ENCODE measurements at regions of chr12 and their contacts with region 1.

Region 1: DNA sequence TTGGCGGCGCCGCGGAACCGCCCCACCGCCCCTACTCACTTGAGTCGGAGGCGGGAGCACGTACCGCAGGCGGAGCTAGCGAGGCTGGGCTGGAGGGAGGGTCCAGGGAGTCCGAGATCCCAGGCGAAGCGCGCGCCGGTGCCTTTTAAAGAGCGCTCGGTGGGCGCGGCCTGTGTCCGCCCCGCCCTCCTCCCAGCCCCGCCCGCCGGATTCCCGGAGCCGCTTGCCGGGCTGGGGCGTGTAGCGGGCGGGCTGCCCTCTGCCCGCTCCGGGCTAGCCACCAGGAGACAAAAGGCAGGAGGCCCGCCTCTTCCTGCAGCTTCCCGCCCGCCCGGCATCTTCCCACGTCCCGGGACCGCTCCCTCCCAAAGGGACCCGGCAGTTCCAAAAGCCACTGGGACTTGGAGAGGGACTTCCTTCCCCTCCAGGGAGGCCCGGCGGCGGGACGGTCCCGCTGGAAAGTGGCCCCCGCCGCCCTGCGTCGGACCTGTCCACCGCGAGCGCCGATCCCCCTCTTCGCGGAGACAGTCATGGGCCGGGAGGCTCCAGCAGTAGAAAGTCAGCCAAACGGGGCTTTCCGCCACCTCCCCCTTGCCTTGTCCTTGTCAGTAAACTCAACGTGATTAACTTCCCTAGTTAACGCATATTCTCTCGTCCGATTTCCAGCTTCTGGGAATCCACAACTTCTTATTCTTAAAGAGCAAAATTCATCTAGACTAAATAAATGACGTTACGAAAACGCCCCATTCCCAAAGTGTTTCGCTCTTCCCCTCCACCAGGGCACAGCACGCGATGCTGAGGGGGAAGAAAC is at the start of gene CSRP2:
- DNase-seq: peak; percentile 82 to 93 (median 91)
- H3K4me3 ChIP-seq: peak within 1 kb of the TSS; percentile 88
- H3K27ac ChIP-seq: peak within 1 kb of the TSS; percentile 13 to 82
- H3K4me1 ChIP-seq: no peaks in the 10 kb centered on the region
- H3K27me3 ChIP-seq: no peaks in the 10 kb centered on the region
- CTCF ChIP-seq: peak in 1 of 3 donors; percentile 16
- EP300 ChIP-seq: no peak
- POLR2A ChIP-seq: peak; percentile 55
- total RNA-seq, gene CSRP2: 7.8 to 22.3 (median 11.8) TPM

Region 2: DNA sequence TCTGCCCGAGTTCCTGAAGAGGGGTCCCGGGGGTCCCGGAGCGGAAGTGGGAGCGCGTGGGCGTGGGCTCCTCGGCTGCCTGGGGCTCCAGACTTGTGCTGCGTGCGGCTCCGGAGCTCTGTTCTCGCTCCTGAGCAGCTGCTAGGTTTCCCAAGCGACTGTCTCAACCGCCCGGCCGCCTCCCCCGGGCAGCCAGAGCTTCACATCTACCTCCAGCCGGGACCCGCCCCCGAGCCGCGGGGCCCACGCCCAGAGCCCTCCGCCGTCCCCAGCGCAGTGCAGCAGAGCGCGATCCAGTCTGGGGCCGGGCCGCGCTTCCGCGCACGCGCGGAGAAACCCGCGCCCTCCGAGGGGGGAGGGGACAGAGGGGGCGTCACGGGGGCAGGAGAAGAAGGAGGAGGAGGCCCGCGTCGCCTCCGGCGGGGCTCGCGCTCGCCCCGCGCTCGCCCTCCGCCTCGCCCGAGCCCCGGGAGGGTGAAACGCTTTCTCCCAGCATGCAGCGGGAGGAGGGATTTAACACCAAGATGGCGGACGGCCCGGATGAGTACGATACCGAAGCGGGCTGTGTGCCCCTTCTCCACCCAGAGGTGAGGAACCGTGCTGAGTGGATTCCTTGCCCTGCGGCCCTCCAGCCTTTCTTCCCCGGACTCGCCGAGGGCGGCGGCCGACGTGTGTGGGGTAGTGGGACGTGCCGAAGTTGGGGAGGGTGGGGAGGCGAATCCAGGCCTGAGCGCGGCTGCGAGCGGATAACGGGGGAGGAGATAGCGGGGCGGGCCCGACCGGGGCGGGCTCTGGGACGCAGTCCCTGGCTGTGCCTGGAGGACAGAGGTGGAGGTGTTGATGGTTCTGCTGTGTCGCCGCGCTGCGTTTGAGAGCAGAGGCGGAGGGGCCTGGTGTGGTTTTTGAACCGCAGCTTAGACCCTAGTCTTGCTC is 115.1 kb before region 1 on chr12 and contains the start of gene ZDHHC17:
- intact Hi-C with region 1: loop called in 1 of 4 experiments (anchors 10 kb)
- DNase-seq: peak; percentile 91 to 97 (median 94)
- H3K4me3 ChIP-seq: peak within 1 kb of the TSS; percentile 81
- H3K27ac ChIP-seq: peak within 1 kb of the TSS; percentile 84 to 96
- H3K4me1 ChIP-seq: peaks cover 3% of the 10 kb centered on the region
- H3K27me3 ChIP-seq: no peaks in the 10 kb centered on the region
- CTCF ChIP-seq: peak in 1 of 3 donors; percentile 15
- EP300 ChIP-seq: no peak
- POLR2A ChIP-seq: peak; percentile 66
- total RNA-seq, gene ZDHHC17: 32.3 to 76.7 (median 40.9) TPM

Region 3: GRCh38 chr12:76920172-76921014 is 41.3 kb after region 1 on chr12:
- intact Hi-C with region 1: no loop called
- DNase-seq: no peak
- H3K4me3 ChIP-seq: no peak overlapping the region
- H3K27ac ChIP-seq: no peak overlapping the region
- H3K4me1 ChIP-seq: no peaks in the 10 kb centered on the region
- H3K27me3 ChIP-seq: no peaks in the 10 kb centered on the region
- CTCF ChIP-seq: no peak
- EP300 ChIP-seq: no peak
- POLR2A ChIP-seq: no peak

Region 4: DNA sequence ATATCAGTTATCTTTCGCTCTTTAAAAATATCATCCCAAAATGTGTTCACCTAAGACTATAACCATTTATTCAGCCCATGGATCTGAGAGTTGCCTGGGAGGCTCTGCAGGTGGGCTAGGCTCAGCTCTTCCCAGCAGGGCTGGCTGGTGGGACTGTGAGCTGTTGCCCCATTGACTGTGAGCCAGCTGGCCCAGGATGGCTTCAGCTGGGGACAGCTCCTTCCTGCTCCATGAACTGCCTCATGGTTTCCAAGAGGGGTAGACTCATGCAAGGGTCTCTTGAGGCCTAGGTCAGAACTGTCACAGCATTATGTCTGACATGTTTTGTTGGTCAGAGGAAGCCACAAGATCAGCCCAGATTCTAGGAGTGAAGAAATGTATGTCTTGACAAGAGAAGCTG is 300.4 kb after region 1 on chr12:
- intact Hi-C with region 1: no loop called
- DNase-seq: no peak
- H3K4me3 ChIP-seq: no peak overlapping the region
- H3K27ac ChIP-seq: no peak overlapping the region
- H3K4me1 ChIP-seq: no peaks in the 10 kb centered on the region
- H3K27me3 ChIP-seq: no peaks in the 10 kb centered on the region
- CTCF ChIP-seq: no peak
- EP300 ChIP-seq: no peak
- POLR2A ChIP-seq: no peak

Measured in ovary (tissue), 10 donors.